ENCODE measurements at regions of chr22 and their contacts with region 1.

Region 1: DNA sequence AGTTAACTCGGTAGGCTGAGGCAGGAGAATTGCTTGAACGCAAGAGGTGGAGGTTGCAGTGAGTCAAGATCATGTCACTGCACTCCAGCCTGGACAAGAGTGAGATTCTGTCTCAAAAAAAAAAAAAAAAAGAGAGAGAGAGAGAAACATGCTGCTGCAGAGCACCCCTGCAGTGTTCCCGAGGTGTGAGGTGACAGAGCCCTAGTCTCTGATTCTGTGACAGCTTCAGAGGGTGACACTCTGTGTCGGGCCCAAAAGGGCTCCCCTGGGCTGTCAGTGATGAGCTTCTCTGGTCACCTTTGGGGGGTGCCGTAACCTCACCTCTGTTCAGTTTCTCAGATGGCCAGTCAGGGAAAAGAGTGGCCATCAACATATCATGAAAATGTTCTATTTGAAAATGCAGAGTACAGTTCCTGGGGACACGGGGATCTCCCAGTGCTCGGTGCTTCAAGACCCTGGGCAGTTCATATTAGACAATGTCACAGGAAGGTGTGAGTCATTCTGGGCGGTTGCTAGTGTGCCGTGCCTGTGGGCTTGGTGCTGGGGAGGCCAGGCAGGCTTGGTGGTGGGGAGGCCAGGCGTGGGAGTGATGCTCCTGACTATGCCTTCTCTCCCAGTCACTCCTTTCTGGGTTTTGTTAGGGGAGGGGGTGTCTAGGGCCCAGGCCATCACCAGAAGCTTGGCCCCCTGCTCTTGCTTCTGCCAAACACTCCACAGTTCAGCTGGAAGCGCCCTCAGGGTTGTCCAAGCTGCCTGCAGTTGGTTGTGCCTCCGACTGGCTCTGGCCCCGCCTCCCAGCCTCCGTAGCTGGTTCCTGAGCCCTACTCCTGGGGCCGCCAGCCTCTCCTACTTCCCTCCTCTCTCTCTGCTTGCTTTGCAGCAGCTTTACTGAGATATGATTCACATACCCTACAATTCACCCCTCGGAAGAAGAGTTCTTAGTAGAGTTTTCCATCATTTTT is 52.5 kb upstream of the CLDN5 start:
- DNase-seq: no peak
- ATAC-seq: peak in 3 of 4 donors; percentile 41 to 58 (median 57)
- H3K4me3 ChIP-seq: no peak overlapping the region
- H3K27ac ChIP-seq: peak overlapping the region; percentile 54
- H3K4me1 ChIP-seq: no peaks in the 10 kb centered on the region
- H3K27me3 ChIP-seq: no peaks in the 10 kb centered on the region
- CTCF ChIP-seq: no peak

Region 2: GRCh38 chr22:19523240-19524169 is 53.2 kb before region 1 on chr22:
- intact Hi-C with region 1: loop called in 1 of 2 experiments (anchors 5 kb)
- DNase-seq: no peak
- ATAC-seq: peak in 3 of 4 donors; percentile 33 to 47 (median 44)
- H3K4me3 ChIP-seq: peak overlapping the region; percentile 64
- H3K27ac ChIP-seq: peak overlapping the region; percentile 53
- H3K4me1 ChIP-seq: peaks cover 9% of the 10 kb centered on the region
- H3K27me3 ChIP-seq: peaks cover 0 to 45% (median 13%) of the 10 kb centered on the region in 3 donors
- CTCF ChIP-seq: no peak

Region 3: DNA sequence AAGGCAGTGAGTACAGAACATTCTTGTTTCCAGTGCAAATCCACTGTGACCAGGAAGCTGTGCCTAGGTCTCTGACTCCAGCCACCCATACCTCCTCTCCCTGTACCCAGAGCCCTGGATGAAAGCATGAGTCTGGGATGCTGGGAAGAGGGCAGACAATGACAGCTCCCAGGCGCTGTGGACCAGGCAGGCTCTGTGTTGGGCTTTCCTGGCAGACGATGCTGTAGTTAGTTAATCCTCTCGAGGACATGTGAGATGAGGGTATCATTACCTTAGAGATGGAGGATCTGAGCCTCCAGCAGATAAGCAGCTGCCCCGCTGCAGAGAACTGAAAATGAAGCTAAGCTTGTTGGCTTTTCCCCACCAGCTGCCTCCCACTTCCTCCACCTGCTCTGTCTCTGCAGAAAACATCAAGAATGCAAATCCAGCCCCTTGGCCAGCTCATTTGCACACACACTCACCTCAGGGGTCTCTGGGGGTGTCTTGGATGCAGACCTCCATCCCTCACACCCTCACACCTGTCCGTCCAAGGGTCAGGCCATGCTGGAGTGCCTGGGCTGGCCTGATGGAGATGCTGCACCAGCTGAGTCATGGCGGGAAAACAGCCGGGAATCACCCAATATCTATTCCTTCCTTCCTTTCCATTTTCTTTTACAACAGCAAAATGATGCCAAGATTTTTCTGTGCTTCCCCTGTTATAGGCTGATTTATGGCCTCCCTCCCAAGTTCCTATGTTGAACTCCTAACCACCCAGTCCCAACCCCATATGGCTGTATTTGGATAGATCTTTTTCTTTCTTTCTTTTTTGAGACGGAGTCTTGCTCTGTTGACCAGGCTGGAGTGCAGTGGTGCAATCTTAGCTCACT is 42.6 kb after region 1 on chr22:
- intact Hi-C with region 1: loop called in 1 of 2 experiments (anchors 5 kb)
- DNase-seq: no peak
- ATAC-seq: no peak
- H3K4me3 ChIP-seq: no peak overlapping the region
- H3K27ac ChIP-seq: no peak overlapping the region
- H3K4me1 ChIP-seq: no peaks in the 10 kb centered on the region
- H3K27me3 ChIP-seq: peaks cover 0 to 10% (median 2%) of the 10 kb centered on the region in 3 donors
- CTCF ChIP-seq: no peak

Region 4: DNA sequence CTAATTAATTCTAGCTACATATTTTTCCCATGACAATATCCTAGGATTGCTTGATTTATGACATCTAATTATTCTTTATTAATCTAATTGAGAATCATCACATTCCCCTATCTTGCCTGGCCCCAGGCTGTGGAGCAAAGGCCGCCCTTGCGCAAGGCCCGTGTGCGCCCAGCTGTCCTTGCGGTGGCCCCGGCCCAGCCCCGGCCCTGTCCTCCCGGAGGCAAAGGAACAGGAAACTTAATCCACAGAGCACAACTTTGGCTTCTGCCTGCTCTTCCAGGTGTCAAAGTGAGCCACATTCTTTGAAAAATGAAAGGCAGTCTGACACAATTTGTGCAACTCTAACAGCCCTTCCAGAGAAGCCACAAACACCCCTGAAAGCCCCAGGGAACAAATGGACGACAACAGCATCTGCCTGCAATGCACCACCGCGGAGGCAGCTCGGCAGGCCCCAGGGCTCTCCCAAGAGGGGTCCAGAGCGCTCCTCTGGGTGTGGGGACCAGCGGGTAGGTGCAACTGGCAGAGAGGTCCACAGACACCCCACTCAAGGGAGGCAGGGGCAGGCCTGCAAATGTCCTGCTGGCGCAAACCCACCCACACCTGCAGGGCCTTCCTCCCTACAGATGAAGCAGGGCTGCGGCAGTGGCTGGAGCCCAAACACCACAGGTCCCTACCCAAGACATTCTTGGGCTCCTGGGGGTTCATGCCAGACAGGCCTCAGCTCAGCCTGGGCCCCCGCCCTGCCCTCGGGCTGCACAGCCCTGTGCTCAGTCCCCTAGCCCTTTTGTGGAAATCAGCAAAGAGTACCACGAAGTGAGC is 247.7 kb after region 1 on chr22:
- intact Hi-C with region 1: no loop called
- DNase-seq: no peak
- ATAC-seq: peak; percentile 47 to 80 (median 78)
- H3K4me3 ChIP-seq: no peak overlapping the region
- H3K27ac ChIP-seq: no peak overlapping the region
- H3K4me1 ChIP-seq: no peaks in the 10 kb centered on the region
- H3K27me3 ChIP-seq: no peaks in the 10 kb centered on the region
- CTCF ChIP-seq: no peak